Mammary epithelial cell (primary cell): ENCODE measurements at regions of chr5 and their contacts with region 1.

Region 1: GRCh38 chr5:139633295-139634027 is 14.7 kb upstream of the CXXC5 start:
- DNase-seq: peak; percentile 57
- H3K4me3 ChIP-seq: no peak overlapping the region
- H3K27ac ChIP-seq: no peak overlapping the region
- H3K4me1 ChIP-seq: peaks cover 25% of the 10 kb centered on the region
- H3K27me3 ChIP-seq: no peaks in the 10 kb centered on the region
- CTCF ChIP-seq: peak; percentile 98 to 99

Region 2: GRCh38 chr5:139517683-139518564 is 115.5 kb before region 1 on chr5:
- CTCF ChIA-PET with region 1: no interaction called
- dilution Hi-C with region 1: loop called (anchors 10 kb)
- in situ Hi-C with region 1: no loop called
- intact Hi-C with region 1: loop called (anchors 5 kb)
- DNase-seq: peak; percentile 73
- H3K4me3 ChIP-seq: peak overlapping the region; percentile 67 to 74 (median 70)
- H3K27ac ChIP-seq: peak overlapping the region; percentile 39
- H3K4me1 ChIP-seq: peaks cover 21% of the 10 kb centered on the region
- H3K27me3 ChIP-seq: no peaks in the 10 kb centered on the region
- CTCF ChIP-seq: peak; percentile 75 to 98

Region 3: DNA sequence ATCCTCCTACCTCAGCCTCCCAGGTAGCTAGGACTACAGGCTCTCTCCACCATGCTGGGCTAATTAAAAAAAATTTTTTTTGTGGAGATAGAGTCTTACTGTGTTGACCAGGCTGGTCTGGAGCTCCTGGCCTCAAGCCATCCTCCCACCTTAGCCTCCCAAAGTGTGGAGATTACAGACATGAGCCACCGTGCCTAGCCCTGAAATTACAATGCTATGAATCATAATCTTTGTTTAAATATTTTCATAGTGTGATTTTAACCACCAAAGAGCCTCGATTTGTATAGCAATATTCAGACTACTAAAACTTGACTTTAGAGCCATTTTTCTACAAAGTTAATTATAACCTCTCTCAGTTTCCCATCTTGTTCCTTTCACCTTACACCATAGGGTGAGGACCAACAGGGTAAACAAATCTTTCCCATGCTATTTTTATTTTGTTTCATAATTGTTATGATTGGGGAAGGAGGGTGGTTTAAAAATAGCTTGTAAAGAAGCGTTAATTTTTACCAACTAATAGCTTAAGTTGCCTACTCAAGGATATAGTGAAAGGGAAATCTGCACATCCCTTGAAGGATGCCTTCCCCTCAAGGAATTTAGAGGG is 39.6 kb before region 1 on chr5:
- CTCF ChIA-PET with region 1: no interaction called
- dilution Hi-C with region 1: loop called (anchors 5 kb)
- in situ Hi-C with region 1: no loop called
- intact Hi-C with region 1: no loop called
- DNase-seq: peak; percentile 62
- H3K4me3 ChIP-seq: peak overlapping the region in 1 of 3 experiments; percentile 24
- H3K27ac ChIP-seq: peak overlapping the region; percentile 88
- H3K4me1 ChIP-seq: peaks cover 6% of the 10 kb centered on the region
- H3K27me3 ChIP-seq: no peaks in the 10 kb centered on the region
- CTCF ChIP-seq: no peak

Region 4: DNA sequence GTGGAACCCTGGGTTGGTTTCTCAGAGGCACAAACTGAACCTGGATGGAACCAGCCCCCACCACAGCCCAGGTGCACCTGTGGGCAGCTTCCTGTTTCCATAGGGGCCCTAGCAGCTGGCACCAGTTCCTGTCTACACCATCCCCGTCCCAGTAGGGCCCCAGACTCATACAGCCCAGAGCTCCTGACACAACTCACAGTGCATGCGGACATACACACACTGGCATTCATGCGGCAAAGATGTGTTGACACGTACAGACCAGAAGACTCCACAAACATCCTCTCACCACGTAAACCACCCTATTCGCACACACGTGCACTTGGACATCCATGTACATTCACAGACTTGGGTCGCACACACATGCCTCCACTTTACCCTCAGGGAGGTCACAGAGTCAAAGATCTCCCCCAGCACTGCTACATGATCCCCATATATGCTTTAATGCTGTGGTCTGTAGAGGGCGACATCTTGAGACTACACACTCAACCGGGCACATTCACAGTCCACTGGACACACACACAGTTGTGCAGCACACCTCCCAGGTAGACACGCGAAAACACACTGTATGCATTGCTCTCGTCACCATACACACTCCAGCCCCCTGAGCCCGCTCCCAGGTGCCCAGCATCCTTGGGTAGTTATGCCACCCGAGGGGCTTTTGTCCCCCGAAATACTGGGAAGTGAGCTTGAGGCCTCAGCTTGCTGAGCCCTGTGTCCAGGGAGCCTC is 37.1 kb after region 1 on chr5:
- CTCF ChIA-PET with region 1: interaction called, 4 read pairs
- dilution Hi-C with region 1: no loop called
- in situ Hi-C with region 1: no loop called
- intact Hi-C with region 1: loop called (anchors 5 kb)
- DNase-seq: no peak
- H3K4me3 ChIP-seq: no peak overlapping the region
- H3K27ac ChIP-seq: no peak overlapping the region
- H3K4me1 ChIP-seq: peaks cover 57% of the 10 kb centered on the region
- H3K27me3 ChIP-seq: no peaks in the 10 kb centered on the region
- CTCF ChIP-seq: peak in 1 of 2 donors; percentile 53

Region 5: DNA sequence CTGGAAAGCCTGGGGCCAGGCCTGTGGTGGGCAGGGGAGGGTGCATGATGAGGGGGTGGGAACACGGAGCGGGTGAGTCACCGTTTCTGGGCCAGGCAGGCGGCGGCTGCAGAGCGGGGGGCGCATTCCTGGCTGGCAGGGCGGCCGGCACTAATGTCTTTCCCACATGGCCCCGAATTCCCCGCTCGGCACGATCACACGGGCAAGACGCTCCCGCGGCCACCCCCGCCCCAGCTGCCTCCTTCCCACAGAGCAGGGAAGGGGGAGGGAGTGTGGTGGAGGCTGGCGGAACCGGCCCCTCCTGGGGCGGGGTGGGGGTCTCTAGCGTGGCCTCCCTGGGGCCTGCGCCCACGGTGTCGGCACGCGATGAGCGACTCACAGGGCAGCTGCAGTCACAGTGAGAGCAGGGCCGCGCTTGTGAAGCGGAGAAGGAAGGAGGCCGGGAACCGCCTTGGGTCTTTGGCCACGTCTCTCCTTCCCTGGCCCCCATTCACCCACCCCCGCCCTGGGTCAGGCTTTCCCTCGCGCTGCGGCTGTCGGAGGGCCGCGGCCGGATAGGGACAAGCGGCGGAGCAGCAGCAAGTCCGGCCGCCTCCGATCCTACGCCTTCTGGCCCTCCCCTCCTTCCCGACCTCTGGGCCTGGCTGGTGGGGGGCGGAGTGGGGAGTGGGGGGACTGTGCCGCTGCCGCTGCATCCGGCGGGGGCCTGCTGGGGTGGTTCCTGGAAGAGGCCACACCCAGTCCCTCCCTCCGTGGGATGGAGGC is 63.6 kb after region 1 on chr5:
- CTCF ChIA-PET with region 1: no interaction called
- dilution Hi-C with region 1: loop called (anchors 5 kb)
- in situ Hi-C with region 1: loop called (anchors 10 kb)
- intact Hi-C with region 1: no loop called
- DNase-seq: peak; percentile 47
- H3K4me3 ChIP-seq: peak overlapping the region in 2 of 3 experiments; percentile 28 to 29
- H3K27ac ChIP-seq: no peak overlapping the region
- H3K4me1 ChIP-seq: peaks cover 17% of the 10 kb centered on the region
- H3K27me3 ChIP-seq: no peaks in the 10 kb centered on the region
- CTCF ChIP-seq: no peak

Region 6: DNA sequence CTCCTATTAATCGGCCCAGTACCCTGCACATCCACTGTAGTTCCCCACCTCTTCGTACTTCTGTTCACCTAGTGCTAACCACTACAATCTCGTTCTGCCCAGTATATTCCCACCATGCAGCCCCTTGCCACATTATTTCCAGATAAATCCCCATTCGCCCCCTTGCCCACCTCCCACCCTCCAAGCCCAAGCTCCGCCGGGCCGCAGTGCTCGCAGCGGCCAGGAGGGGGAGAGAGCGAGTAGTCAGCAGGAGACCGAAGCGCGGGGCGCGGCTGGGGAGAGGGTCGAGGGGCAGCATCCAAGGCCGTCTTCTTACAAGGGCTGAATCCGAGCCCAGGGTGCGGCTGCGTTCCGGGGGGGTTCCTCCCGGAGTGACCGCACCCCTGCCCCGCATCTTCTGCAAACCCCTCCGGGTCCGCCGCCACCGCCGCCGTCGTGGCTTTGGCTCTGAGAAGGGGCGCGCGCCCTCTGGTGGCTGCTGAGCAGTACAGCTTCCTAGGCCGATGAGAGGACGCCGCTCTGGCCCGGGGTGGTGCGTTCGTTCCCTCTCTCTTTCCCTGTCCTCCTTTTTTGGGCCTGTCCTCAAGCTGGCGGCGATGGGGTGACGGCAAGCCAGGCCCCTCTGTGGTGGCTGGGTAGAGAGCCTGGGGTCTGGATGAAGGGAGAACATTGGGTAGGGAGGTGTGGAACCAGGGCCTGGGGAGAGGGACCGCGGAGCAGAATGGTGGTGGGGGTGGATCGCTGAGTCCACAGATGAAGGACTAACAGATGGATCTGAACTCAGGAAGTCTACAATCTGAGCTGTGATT is 132.2 kb after region 1 on chr5:
- CTCF ChIA-PET with region 1: interaction called, 4 read pairs
- dilution Hi-C with region 1: no loop called
- in situ Hi-C with region 1: loop called (anchors 5 kb)
- intact Hi-C with region 1: loop called (anchors 1 kb)
- DNase-seq: peak; percentile 56
- H3K4me3 ChIP-seq: peak overlapping the region; percentile 53 to 76 (median 59)
- H3K27ac ChIP-seq: no peak overlapping the region
- H3K4me1 ChIP-seq: no peaks in the 10 kb centered on the region
- H3K27me3 ChIP-seq: no peaks in the 10 kb centered on the region
- CTCF ChIP-seq: peak; percentile 55 to 69

Region 7: DNA sequence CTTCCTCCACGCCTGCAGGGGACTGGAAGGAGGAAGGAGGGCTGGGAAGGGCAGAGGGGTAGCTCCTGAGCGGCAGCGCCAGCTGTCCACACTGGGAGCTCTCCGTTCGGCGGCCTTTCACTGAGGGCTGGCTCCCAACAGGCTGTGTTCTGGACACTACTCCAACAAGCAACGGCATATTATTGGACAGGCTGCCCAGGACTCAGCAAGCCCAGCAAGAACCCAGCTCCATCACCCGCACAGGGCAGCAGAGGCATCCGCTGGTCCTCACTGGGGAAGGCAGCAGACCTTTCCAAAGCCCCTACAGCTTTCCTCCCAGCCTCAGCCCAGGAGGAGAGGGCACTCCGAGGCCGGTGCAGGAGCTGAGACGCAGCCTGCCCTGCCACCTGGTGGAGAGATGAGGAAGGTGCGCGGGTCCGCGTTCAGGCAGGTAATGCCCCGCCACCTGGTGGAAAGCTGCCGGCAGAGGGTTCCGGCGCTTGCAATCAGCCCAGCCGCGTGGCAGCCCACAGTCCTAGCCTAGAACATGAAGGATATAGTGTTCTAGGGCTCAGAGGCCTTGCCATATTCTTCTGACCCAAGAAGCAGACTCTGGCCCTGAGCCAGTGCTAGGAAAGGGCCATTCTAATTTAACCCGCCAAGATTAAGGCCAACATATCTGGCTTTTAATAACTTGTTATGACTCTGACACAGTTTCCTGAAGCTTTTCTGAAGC is 335.2 kb after region 1 on chr5:
- CTCF ChIA-PET with region 1: no interaction called
- dilution Hi-C with region 1: loop called (anchors 5 kb)
- in situ Hi-C with region 1: no loop called
- intact Hi-C with region 1: no loop called
- DNase-seq: peak; percentile 74
- H3K4me3 ChIP-seq: no peak overlapping the region
- H3K27ac ChIP-seq: no peak overlapping the region
- H3K4me1 ChIP-seq: peaks cover 4% of the 10 kb centered on the region
- H3K27me3 ChIP-seq: no peaks in the 10 kb centered on the region
- CTCF ChIP-seq: peak; percentile 99 to 100